IMR-90 (cell line): ENCODE measurements at regions of chr2 and their contacts with region 1.

Region 1: DNA sequence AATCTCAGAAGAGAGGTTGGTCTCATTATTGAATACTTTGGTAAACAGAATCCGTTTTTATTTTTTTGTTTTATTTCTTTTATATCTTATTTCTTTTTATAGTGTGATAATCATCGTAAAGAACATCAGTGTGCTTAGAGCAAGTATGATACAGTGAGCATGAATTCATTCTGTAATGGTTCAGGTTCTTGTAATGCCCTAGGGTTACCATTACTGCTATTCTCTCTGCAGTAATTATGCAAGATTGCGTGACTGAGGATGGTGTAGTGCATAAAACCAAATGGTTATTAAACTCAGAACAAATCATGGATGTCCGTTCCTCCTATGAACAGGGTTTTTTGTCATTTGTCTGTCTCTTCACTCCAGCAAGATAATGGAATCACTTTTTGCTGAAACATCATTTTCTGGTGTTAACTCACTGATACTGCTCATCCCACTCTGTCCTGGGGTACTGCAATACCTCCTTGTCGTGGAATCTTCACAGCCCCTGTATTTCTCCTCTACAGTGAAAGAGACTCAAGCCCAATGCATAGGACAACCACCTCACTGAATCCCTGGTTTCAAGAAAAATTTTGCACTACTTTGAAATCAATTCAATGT is 274.8 kb upstream of the ST6GAL2 start:
- DNase-seq: no peak
- ATAC-seq: no peak
- H3K4me3 ChIP-seq: no peak overlapping the region
- H3K27ac ChIP-seq: no peak overlapping the region
- H3K4me1 ChIP-seq: no peaks in the 10 kb centered on the region
- H3K27me3 ChIP-seq: no peaks in the 10 kb centered on the region
- CTCF ChIP-seq: no peak
- POLR2A ChIP-seq: no peak
- RAD21 ChIP-seq: no peak

Region 2: DNA sequence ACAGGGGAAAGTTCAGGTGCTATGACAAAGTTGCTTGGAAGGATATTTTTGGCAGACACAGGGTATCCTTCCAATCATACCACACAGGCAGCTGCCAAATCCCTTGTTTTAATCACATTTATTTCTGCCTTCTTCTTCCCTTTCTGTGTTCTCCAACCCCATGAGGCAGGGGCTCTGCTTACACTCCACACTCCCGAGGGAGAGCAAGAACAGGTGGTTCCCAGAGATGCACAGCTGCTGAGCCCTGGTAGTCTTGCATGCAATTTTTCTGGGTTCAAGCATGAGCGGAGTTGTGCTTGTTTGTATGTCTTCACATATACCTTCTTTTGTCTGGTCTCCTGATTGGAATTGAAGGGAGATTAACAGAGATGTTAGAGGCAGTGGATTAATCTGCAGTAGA is 23.0 kb before region 1 on chr2:
- CTCF ChIA-PET with region 1: no interaction called
- POLR2A ChIA-PET with region 1: no interaction called
- dilution Hi-C with region 1: no loop called
- in situ Hi-C with region 1: no loop called
- intact Hi-C with region 1: loop called (anchors 1 kb)
- DNase-seq: no peak
- ATAC-seq: no peak
- H3K4me3 ChIP-seq: no peak overlapping the region
- H3K27ac ChIP-seq: no peak overlapping the region
- H3K4me1 ChIP-seq: no peaks in the 10 kb centered on the region
- H3K27me3 ChIP-seq: no peaks in the 10 kb centered on the region
- CTCF ChIP-seq: no peak
- POLR2A ChIP-seq: no peak
- RAD21 ChIP-seq: no peak